Naive thymus-derived CD4-positive, alpha-beta T cell (primary cell): ENCODE measurements at regions of chr14 and their contacts with region 1.

Region 1: DNA sequence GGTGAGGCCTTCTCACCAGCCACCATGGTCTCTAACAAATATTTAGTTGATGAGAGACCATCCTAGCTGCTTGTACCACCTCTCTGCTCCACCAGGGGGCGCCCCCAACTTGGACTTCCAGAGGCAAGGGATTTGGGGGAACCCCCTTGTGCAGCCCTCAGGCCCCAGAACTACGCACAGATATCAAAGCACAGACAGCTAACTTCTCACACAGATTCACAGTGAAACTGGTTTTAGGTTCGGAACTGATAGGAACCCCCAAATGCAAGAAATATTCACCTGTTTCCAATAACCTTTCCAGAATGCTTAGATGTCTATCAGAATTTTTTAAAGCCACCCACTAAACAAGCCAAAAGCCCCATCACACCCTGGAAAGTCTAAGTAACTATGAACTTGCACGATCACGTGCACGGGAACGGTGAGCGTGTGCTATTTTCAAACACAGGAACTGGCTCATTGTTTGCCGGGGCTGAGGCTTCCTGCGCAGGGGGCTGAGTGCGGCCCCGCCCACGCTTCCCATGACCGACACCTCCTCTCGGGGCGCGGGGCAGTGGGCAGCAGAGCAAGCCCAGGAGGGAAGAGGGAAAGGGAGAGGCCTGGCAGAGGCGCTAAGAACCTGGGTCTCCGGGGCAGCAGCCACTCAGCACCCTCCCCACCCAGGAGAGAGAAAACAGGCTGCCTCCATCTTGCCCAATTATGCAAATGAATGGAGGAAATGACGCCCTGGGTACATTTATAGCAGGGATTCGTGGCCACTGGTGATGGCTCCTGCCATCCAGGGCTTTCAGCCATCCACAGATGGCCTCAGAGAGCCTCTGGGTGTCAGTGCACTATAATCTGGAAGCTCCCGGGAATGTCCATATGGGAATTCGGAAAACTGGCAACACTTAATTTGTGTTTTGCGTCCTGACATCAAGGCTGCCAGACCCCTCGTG is 79.4 kb upstream of the GPR68 start:
- DNase-seq: peak; percentile 90 to 95 (median 92)
- ATAC-seq: peak; percentile 94
- H3K4me3 ChIP-seq: peak overlapping the region; percentile 39
- H3K4me3 Mint-ChIP-seq: peak overlapping the region; percentile 77 to 98 (median 84)
- H3K27ac ChIP-seq: peak overlapping the region; percentile 81
- H3K27ac Mint-ChIP-seq: peak overlapping the region; percentile 94 to 100 (median 99)
- H3K4me1 ChIP-seq: peaks cover 48 to 60% of the 10 kb centered on the region in 2 donors
- H3K4me1 Mint-ChIP-seq: peaks cover 52 to 91% (median 82%) of the 10 kb centered on the region in 7 donors
- H3K27me3 ChIP-seq: no peaks in the 10 kb centered on the region
- H3K27me3 Mint-ChIP-seq: no peaks in the 10 kb centered on the region

Region 2: DNA sequence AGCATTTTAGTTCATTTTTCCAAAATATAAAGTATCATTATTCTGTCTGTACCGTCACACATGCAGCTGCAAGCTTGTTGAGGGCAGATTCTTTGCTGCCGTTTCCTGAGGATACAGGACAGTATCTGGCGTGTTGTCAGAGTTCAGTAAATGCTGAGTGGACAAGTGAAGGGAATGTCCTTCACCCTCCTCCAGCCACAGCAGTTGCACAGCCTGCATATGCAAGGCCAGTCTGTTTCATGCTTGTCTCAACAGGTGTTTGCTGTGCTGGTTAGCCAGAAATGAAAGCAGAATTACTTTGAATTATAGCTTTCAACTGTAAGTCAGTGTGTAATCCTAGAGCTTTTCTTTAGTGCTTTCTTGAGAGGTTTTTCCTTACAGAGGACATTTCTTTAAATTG is 1331.7 kb before region 1 on chr14:
- CTCF ChIA-PET with region 1: no interaction called
- POLR2A ChIA-PET with region 1: no interaction called
- intact Hi-C with region 1: no loop called
- DNase-seq: no peak
- ATAC-seq: no peak
- H3K4me3 ChIP-seq: no peak overlapping the region
- H3K4me3 Mint-ChIP-seq: no peak overlapping the region
- H3K27ac ChIP-seq: no peak overlapping the region
- H3K27ac Mint-ChIP-seq: no peak overlapping the region
- H3K4me1 ChIP-seq: no peaks in the 10 kb centered on the region
- H3K4me1 Mint-ChIP-seq: peaks cover 0 to 2% (median 0%) of the 10 kb centered on the region in 7 donors
- H3K27me3 ChIP-seq: no peaks in the 10 kb centered on the region
- H3K27me3 Mint-ChIP-seq: no peaks in the 10 kb centered on the region

Region 3: DNA sequence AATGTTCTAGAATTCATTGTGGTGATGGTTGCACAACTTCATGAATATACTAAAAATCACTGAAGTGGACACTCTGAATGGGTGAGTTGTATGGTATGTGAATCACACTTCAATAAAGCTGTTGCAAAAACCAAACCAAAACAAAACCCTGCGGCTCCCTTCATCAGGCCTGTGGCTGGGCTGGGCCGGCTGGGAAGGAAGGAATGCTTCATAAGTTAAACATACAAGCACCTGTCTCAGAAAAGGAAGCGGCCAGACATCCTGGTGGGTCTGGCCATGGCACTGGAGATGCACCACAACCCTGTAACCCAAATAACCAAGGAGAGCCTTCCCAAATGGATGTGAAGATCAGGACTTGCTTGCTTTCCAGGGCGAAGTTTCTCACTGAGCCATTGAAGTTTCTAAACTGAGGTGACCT is 542.6 kb before region 1 on chr14:
- CTCF ChIA-PET with region 1: no interaction called
- POLR2A ChIA-PET with region 1: no interaction called
- intact Hi-C with region 1: no loop called
- DNase-seq: no peak
- ATAC-seq: no peak
- H3K4me3 ChIP-seq: no peak overlapping the region
- H3K4me3 Mint-ChIP-seq: no peak overlapping the region
- H3K27ac ChIP-seq: no peak overlapping the region
- H3K27ac Mint-ChIP-seq: no peak overlapping the region
- H3K4me1 ChIP-seq: no peaks in the 10 kb centered on the region
- H3K4me1 Mint-ChIP-seq: no peaks in the 10 kb centered on the region
- H3K27me3 ChIP-seq: no peaks in the 10 kb centered on the region
- H3K27me3 Mint-ChIP-seq: no peaks in the 10 kb centered on the region

Region 4: DNA sequence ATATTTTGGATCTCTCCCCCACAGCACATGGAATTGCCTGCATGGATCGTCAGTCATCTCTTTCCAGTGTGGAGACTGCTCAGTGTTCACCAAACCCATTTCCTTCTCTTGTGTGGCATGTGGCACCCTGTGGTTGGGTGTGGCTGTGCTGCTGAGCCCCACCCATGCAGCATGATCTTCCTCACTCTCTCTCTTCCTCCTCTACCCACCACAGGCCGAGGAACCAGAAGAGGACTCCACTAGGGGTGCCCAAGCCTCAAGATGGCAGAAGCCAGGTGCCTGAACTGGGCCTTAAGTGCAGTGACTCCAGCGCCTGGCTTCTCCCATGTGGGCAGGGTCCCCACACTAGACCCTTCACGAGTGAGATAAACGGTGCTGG is 12.7 kb before region 1 on chr14:
- CTCF ChIA-PET with region 1: interaction called, 7 read pairs
- POLR2A ChIA-PET with region 1: interaction called, 10 read pairs
- intact Hi-C with region 1: loop called (anchors 1 kb)
- DNase-seq: peak in 7 of 9 donors; percentile 52 to 70 (median 63)
- ATAC-seq: peak; percentile 74
- H3K4me3 ChIP-seq: peak overlapping the region; percentile 17
- H3K4me3 Mint-ChIP-seq: peak overlapping the region; percentile 7 to 79 (median 68)
- H3K27ac ChIP-seq: peak overlapping the region; percentile 68
- H3K27ac Mint-ChIP-seq: peak overlapping the region; percentile 74 to 99 (median 94)
- H3K4me1 ChIP-seq: peaks cover 38 to 41% of the 10 kb centered on the region in 2 donors
- H3K4me1 Mint-ChIP-seq: peaks cover 42 to 84% (median 66%) of the 10 kb centered on the region in 7 donors
- H3K27me3 ChIP-seq: no peaks in the 10 kb centered on the region
- H3K27me3 Mint-ChIP-seq: no peaks in the 10 kb centered on the region

Region 5: DNA sequence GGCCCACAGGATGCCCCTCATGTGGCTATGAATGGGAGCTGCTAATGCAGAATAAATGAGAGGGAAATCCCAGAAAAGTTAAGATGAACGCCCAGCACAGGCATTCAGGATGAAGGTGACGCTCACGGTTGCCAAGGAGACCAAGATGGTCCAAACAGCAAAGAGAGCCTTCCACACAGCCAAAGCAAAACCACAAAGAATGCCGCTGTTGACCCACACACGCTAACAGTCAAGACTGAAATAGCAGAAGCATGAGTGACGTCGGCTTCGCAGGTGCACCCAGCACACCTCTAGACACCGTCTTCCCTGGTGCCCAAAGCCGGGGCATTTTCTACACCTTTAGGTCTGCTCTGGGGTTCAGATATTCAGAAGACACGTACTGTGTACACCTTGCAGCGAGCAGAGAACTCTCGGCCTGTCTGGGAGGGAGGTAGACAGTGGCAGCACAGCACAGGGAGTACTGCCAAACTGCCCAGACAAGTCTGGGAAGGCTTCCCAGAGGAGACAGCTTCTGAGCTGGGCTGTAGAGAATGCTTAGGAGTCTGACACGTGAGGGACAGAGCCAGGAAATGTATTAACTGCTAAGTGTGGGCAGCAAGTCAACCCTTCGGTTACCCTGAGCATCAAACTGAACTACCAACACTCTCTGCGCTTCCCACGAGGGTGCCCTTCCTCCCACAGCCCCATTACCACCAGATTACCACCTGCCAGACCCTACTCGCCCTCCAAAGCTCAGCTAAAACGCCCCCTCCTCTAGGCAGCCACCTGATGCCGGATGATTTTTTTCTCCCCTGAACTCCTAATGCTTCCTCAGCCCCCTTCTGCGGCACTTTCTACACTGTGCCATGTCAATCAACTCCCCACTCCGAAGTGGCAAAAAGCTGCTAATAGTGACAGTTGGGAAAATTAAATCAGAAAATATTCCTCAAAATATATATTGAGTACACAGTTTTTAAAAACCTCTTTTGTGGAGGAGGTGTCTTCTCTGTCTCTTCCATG is 43.5 kb after region 1 on chr14:
- CTCF ChIA-PET with region 1: interaction called, 4 read pairs
- POLR2A ChIA-PET with region 1: interaction called, 3 read pairs
- intact Hi-C with region 1: loop called in 1 of 2 experiments (anchors 2 kb)
- DNase-seq: peak in 8 of 9 donors; percentile 40 to 90 (median 60)
- ATAC-seq: peak; percentile 86
- H3K4me3 ChIP-seq: peak overlapping the region; percentile 23
- H3K4me3 Mint-ChIP-seq: peak overlapping the region; percentile 69 to 89 (median 82)
- H3K27ac ChIP-seq: peak overlapping the region; percentile 80
- H3K27ac Mint-ChIP-seq: peak overlapping the region; percentile 71 to 97 (median 93)
- H3K4me1 ChIP-seq: peaks cover 86 to 88% of the 10 kb centered on the region in 2 donors
- H3K4me1 Mint-ChIP-seq: peaks cover 65 to 97% (median 87%) of the 10 kb centered on the region in 7 donors
- H3K27me3 ChIP-seq: no peaks in the 10 kb centered on the region
- H3K27me3 Mint-ChIP-seq: no peaks in the 10 kb centered on the region

Region 6: DNA sequence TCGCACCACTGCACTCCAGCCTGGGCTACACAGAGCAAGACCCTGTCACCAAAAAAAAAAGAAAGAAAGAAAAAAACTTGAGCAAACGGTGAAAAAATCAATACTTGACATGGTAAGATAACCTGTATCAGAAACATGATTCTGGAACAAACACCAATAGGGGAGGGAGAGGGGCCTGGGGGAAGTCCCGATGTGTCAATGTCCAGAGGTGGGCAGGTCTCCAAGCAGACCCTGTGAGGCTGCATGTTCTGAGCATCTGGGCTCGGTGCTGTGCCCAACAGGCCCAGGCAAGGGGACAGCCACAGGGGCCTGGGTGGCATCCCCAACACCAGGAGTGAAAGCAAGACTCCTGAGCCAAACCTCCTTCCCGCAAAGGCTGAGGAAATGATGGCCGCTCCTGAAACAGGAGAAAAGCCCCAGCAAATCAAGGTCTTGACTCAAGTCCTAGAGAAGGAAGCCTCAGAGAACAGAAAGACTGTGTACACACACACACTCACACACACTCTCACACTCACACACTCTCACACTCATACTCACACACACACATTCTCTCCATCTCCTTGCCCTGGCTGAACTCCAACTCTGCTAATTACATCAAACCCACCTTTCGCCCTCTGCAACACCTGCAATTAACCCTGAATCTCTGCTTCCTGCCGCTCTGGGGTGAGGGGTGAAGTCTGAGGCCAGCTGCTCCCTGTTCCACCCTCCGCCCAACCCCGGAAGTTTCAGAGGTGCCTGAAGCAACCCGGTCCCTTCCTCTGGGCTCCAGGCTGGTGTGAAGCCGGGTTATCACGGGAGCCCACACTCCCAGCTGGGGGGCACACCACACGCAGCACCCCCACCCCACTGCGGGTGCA is 73.2 kb after region 1 on chr14:
- CTCF ChIA-PET with region 1: interaction called, 8 read pairs
- POLR2A ChIA-PET with region 1: interaction called, 7 read pairs
- intact Hi-C with region 1: loop called in 1 of 2 experiments (anchors 1 kb)
- DNase-seq: peak in 8 of 9 donors; percentile 61 to 77 (median 71)
- ATAC-seq: peak; percentile 68
- H3K4me3 ChIP-seq: peak overlapping the region; percentile 43
- H3K4me3 Mint-ChIP-seq: peak overlapping the region; percentile 73 to 99 (median 86)
- H3K27ac ChIP-seq: peak overlapping the region; percentile 76
- H3K27ac Mint-ChIP-seq: peak overlapping the region; percentile 77 to 99 (median 89)
- H3K4me1 ChIP-seq: peaks cover 88 to 90% of the 10 kb centered on the region in 2 donors
- H3K4me1 Mint-ChIP-seq: peaks cover 80 to 98% (median 91%) of the 10 kb centered on the region in 7 donors
- H3K27me3 ChIP-seq: no peaks in the 10 kb centered on the region
- H3K27me3 Mint-ChIP-seq: no peaks in the 10 kb centered on the region

Region 7: GRCh38 chr14:91424813-91425530 is 101.0 kb after region 1 on chr14:
- CTCF ChIA-PET with region 1: interaction called, 101 read pairs
- POLR2A ChIA-PET with region 1: interaction called, 173 read pairs
- intact Hi-C with region 1: loop called in 1 of 2 experiments (anchors 1 kb)
- DNase-seq: no peak
- ATAC-seq: no peak
- H3K4me3 ChIP-seq: no peak overlapping the region
- H3K4me3 Mint-ChIP-seq: no peak overlapping the region
- H3K27ac ChIP-seq: no peak overlapping the region
- H3K27ac Mint-ChIP-seq: peak overlapping the region in 6 of 9 donors; percentile 4 to 74 (median 20)
- H3K4me1 ChIP-seq: peaks cover 3% of the 10 kb centered on the region in 2 donors
- H3K4me1 Mint-ChIP-seq: peaks cover 2 to 39% (median 20%) of the 10 kb centered on the region in 7 donors
- H3K27me3 ChIP-seq: no peaks in the 10 kb centered on the region
- H3K27me3 Mint-ChIP-seq: peaks cover 0 to 4% (median 0%) of the 10 kb centered on the region in 5 donors

Region 8: DNA sequence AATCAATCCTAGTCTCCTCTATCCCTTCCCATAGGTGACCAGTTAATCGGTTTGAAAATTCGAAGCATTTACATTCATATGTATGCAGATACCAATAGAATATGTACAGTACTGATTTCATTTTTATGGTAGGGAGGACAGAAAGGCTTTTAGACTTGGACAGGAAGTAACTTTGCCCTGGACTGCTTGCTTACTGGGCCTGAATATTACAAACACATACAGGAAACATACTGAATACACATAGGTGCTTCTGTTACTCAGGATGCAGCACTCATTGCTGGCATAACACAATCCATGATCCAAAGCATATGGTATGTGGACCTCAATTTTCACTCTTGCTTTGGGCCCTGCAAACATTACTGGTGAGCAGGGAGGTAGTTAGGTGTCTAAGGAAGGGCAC is 336.9 kb after region 1 on chr14:
- CTCF ChIA-PET with region 1: no interaction called
- POLR2A ChIA-PET with region 1: no interaction called
- intact Hi-C with region 1: no loop called
- DNase-seq: no peak
- ATAC-seq: no peak
- H3K4me3 ChIP-seq: no peak overlapping the region
- H3K4me3 Mint-ChIP-seq: no peak overlapping the region
- H3K27ac ChIP-seq: no peak overlapping the region
- H3K27ac Mint-ChIP-seq: no peak overlapping the region
- H3K4me1 ChIP-seq: no peaks in the 10 kb centered on the region
- H3K4me1 Mint-ChIP-seq: no peaks in the 10 kb centered on the region
- H3K27me3 ChIP-seq: no peaks in the 10 kb centered on the region
- H3K27me3 Mint-ChIP-seq: no peaks in the 10 kb centered on the region